Naive thymus-derived CD4-positive, alpha-beta T cell (primary cell): ENCODE measurements at regions of chr3 and their contacts with region 1.

Region 1: GRCh38 chr3:32510075-32510724 is 7.5 kb upstream of the CMTM6 start:
- DNase-seq: peak; percentile 30 to 75 (median 63)
- ATAC-seq: peak; percentile 97
- H3K4me3 ChIP-seq: no peak overlapping the region
- H3K4me3 Mint-ChIP-seq: no peak overlapping the region
- H3K27ac ChIP-seq: no peak overlapping the region
- H3K27ac Mint-ChIP-seq: no peak overlapping the region
- H3K4me1 ChIP-seq: no peaks in the 10 kb centered on the region
- H3K4me1 Mint-ChIP-seq: peaks cover 0 to 5% (median 2%) of the 10 kb centered on the region in 7 donors
- H3K27me3 ChIP-seq: no peaks in the 10 kb centered on the region
- H3K27me3 Mint-ChIP-seq: peaks cover 0 to under 1% (median 0%) of the 10 kb centered on the region in 5 donors

Region 2: DNA sequence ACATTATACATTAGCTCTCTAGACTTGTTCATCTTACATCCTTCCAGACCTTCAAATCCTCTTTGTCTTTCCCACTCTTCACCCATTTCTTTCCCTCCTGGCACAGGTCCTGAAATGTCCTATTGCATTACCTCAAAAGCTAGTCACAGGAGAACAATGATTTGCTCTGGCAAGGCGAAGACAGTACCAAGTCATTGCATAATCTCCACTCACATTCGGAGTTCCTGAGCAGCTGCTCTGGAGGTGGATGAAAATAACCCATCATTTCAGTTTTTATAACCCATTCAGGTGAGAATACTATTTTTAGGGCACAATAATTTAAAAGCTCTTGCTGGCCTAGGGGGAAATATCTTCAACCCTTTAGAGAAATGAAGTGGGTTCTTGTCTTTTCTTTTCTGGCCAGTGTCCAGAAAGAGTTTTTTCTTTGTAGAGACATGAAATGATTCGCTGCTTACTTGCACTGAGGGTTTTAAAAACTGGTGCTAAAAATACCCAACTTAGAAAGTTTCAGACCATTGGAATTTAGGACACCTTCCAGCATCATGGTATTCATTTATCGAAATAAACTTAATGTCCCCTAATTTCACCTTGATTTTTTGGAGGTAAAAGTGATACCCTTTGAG is 83.8 kb after region 1 on chr3:
- CTCF ChIA-PET with region 1: interaction called, 3 read pairs
- POLR2A ChIA-PET with region 1: no interaction called
- intact Hi-C with region 1: loop called in 1 of 2 experiments (anchors 1 kb)
- DNase-seq: no peak
- ATAC-seq: no peak
- H3K4me3 ChIP-seq: no peak overlapping the region
- H3K4me3 Mint-ChIP-seq: no peak overlapping the region
- H3K27ac ChIP-seq: no peak overlapping the region
- H3K27ac Mint-ChIP-seq: no peak overlapping the region
- H3K4me1 ChIP-seq: no peaks in the 10 kb centered on the region
- H3K4me1 Mint-ChIP-seq: peaks cover 0 to 6% (median 0%) of the 10 kb centered on the region in 7 donors
- H3K27me3 ChIP-seq: no peaks in the 10 kb centered on the region
- H3K27me3 Mint-ChIP-seq: peaks cover 0 to 32% (median 8%) of the 10 kb centered on the region in 5 donors

Region 3: GRCh38 chr3:32667122-32667521 is 156.9 kb after region 1 on chr3:
- CTCF ChIA-PET with region 1: interaction called, 5 read pairs
- POLR2A ChIA-PET with region 1: no interaction called
- intact Hi-C with region 1: loop called (anchors 1 kb)
- DNase-seq: no peak
- ATAC-seq: no peak
- H3K4me3 ChIP-seq: no peak overlapping the region
- H3K4me3 Mint-ChIP-seq: no peak overlapping the region
- H3K27ac ChIP-seq: no peak overlapping the region
- H3K27ac Mint-ChIP-seq: no peak overlapping the region
- H3K4me1 ChIP-seq: no peaks in the 10 kb centered on the region
- H3K4me1 Mint-ChIP-seq: no peaks in the 10 kb centered on the region
- H3K27me3 ChIP-seq: no peaks in the 10 kb centered on the region
- H3K27me3 Mint-ChIP-seq: peaks cover 0 to 13% (median 0%) of the 10 kb centered on the region in 5 donors

Region 4: GRCh38 chr3:32781210-32781968 is 271.2 kb after region 1 on chr3:
- CTCF ChIA-PET with region 1: interaction called, 6 read pairs
- POLR2A ChIA-PET with region 1: no interaction called
- intact Hi-C with region 1: loop called (anchors 1 kb)
- DNase-seq: peak in 8 of 9 donors; percentile 11 to 80 (median 44)
- ATAC-seq: peak; percentile 93
- H3K4me3 ChIP-seq: peak overlapping the region; percentile 62
- H3K4me3 Mint-ChIP-seq: peak overlapping the region; percentile 86 to 97 (median 91)
- H3K27ac ChIP-seq: no peak overlapping the region
- H3K27ac Mint-ChIP-seq: peak overlapping the region in 3 of 9 donors; percentile 30 to 59 (median 32)
- H3K4me1 ChIP-seq: peaks cover 0 to 7% of the 10 kb centered on the region in 2 donors
- H3K4me1 Mint-ChIP-seq: peaks cover 0 to 9% (median 4%) of the 10 kb centered on the region in 7 donors
- H3K27me3 ChIP-seq: peaks cover 0 to 4% of the 10 kb centered on the region in 2 donors
- H3K27me3 Mint-ChIP-seq: peaks cover 6 to 18% (median 10%) of the 10 kb centered on the region in 5 donors

Region 5: GRCh38 chr3:32922078-32922477 is 411.9 kb after region 1 on chr3:
- CTCF ChIA-PET with region 1: no interaction called
- POLR2A ChIA-PET with region 1: no interaction called
- intact Hi-C with region 1: no loop called
- DNase-seq: no peak
- ATAC-seq: no peak
- H3K4me3 ChIP-seq: no peak overlapping the region
- H3K4me3 Mint-ChIP-seq: no peak overlapping the region
- H3K27ac ChIP-seq: no peak overlapping the region
- H3K27ac Mint-ChIP-seq: no peak overlapping the region
- H3K4me1 ChIP-seq: no peaks in the 10 kb centered on the region
- H3K4me1 Mint-ChIP-seq: no peaks in the 10 kb centered on the region
- H3K27me3 ChIP-seq: no peaks in the 10 kb centered on the region
- H3K27me3 Mint-ChIP-seq: peaks cover 0 to 18% (median 0%) of the 10 kb centered on the region in 5 donors

Region 6: GRCh38 chr3:32934150-32934742 is 424.0 kb after region 1 on chr3:
- CTCF ChIA-PET with region 1: interaction called, 3 read pairs
- POLR2A ChIA-PET with region 1: no interaction called
- intact Hi-C with region 1: loop called (anchors 1 kb)
- DNase-seq: peak in 1 of 9 donors; percentile 18
- ATAC-seq: no peak
- H3K4me3 ChIP-seq: no peak overlapping the region
- H3K4me3 Mint-ChIP-seq: no peak overlapping the region
- H3K27ac ChIP-seq: no peak overlapping the region
- H3K27ac Mint-ChIP-seq: no peak overlapping the region
- H3K4me1 ChIP-seq: no peaks in the 10 kb centered on the region
- H3K4me1 Mint-ChIP-seq: no peaks in the 10 kb centered on the region
- H3K27me3 ChIP-seq: no peaks in the 10 kb centered on the region
- H3K27me3 Mint-ChIP-seq: peaks cover 0 to 16% (median 8%) of the 10 kb centered on the region in 5 donors

Region 7: DNA sequence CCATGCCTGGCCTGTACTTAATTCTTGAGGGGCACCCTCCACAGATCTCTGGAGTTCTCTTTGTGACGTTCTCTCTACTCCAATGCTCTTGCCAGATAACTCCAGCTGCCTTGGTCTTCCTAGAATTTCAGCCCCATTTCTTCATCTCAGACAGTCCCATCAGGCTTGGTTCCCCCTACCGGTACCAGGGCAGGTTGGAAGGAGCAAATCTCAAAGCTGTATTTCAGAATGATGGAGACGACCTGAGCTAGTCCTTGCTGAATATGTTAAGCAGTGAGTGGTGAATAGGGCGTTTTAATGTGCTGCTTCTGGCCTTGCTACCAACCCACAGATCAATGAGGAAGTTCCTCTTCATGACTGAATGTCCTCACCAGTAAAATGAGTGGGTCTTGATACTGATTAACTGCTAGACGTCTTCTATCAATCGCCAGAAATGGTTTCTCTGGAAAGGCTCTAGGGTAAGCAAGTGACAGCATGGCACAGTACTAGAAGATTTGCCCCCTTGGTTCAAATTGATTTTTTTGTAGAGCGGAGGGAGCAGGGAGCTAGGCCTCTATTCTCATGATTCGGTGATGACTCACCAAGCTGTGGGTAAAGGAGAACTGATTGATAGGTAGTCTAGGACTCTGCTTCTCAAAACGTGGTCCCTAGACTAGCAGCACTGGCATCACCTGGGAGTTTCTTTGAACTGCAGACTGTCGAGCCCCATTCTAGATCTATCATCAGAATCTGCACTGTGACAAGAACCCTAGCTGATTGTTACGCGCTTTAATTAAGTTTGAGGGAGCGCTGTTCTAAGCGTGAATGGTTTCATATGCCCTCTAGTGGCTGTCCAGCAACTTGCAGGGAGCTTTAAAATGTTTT is 862.2 kb after region 1 on chr3:
- CTCF ChIA-PET with region 1: no interaction called
- POLR2A ChIA-PET with region 1: no interaction called
- intact Hi-C with region 1: loop called in 1 of 2 experiments (anchors 1 kb)
- DNase-seq: peak in 8 of 9 donors; percentile 14 to 57 (median 38)
- ATAC-seq: peak; percentile 80
- H3K4me3 ChIP-seq: no peak overlapping the region
- H3K4me3 Mint-ChIP-seq: no peak overlapping the region
- H3K27ac ChIP-seq: no peak overlapping the region
- H3K27ac Mint-ChIP-seq: no peak overlapping the region
- H3K4me1 ChIP-seq: peaks cover 0 to 4% of the 10 kb centered on the region in 2 donors
- H3K4me1 Mint-ChIP-seq: peaks cover 2 to 8% (median 6%) of the 10 kb centered on the region in 7 donors
- H3K27me3 ChIP-seq: peaks cover 0 to 6% of the 10 kb centered on the region in 2 donors
- H3K27me3 Mint-ChIP-seq: peaks cover 12 to 32% (median 22%) of the 10 kb centered on the region in 5 donors